CD8-positive, alpha-beta T cell (primary cell): ENCODE measurements at regions of chr15 and their contacts with region 1.

Region 1: GRCh38 chr15:72272213-72273002 is at the start of gene PARP6:
- DNase-seq: peak; percentile 97 to 100 (median 99)
- ATAC-seq: peak; percentile 95
- H3K4me3 ChIP-seq: peak within 1 kb of the TSS; percentile 82 to 89
- H3K4me3 Mint-ChIP-seq: peak within 1 kb of the TSS; percentile 87
- H3K27ac ChIP-seq: peak within 1 kb of the TSS; percentile 84 to 85
- H3K27ac Mint-ChIP-seq: peak within 1 kb of the TSS; percentile 93
- H3K4me1 ChIP-seq: peaks cover 28% of the 10 kb centered on the region
- H3K4me1 Mint-ChIP-seq: peaks cover 43% of the 10 kb centered on the region
- H3K27me3 ChIP-seq: no peaks in the 10 kb centered on the region
- H3K27me3 Mint-ChIP-seq: no peaks in the 10 kb centered on the region
- CTCF ChIP-seq: peak; percentile 61
- total RNA-seq, gene PARP6: 133 to 137 TPM

Region 2: GRCh38 chr15:72199711-72200212 is 72.6 kb before region 1 on chr15:
- CTCF ChIA-PET with region 1: interaction called, 7 read pairs
- POLR2A ChIA-PET with region 1: interaction called, 3 read pairs
- intact Hi-C with region 1: loop called (anchors 1 to 5 kb)
- DNase-seq: peak; percentile 55 to 84 (median 77)
- ATAC-seq: peak; percentile 91
- H3K4me3 ChIP-seq: no peak overlapping the region
- H3K4me3 Mint-ChIP-seq: no peak overlapping the region
- H3K27ac ChIP-seq: no peak overlapping the region
- H3K27ac Mint-ChIP-seq: no peak overlapping the region
- H3K4me1 ChIP-seq: peaks cover 5% of the 10 kb centered on the region
- H3K4me1 Mint-ChIP-seq: peaks cover 9% of the 10 kb centered on the region
- H3K27me3 ChIP-seq: peaks cover 0 to 4% of the 10 kb centered on the region in 2 experiments
- H3K27me3 Mint-ChIP-seq: peaks cover 13% of the 10 kb centered on the region
- CTCF ChIP-seq: peak; percentile 83

Region 3: DNA sequence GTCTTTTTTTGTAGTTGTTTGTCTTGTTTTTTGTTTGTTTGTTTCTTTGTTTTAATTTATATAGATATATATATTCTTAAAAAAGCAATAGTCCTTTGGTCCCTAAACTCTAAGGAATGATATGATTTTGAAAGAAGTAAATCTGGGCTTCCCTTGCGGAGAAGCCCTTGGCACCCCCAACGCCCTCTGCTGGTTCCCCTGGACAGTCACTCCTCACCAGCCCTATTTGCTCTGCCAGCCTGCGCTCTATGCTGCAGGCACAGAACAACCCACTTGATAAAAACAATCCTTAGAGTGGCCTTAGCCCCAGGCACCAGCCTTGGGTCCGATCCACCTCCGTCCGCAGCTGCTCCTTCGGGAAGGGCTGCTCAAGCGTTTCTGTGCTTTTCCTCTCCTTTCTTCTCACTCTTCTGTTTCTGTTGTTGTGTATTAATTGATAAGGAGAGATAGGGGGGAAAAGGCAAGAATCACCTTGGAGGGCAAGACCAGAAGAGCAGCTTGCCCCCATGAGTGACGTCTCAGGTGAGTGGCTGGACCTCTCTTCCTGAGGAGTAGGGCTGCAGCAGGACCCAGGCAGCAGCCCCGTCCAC is 13.6 kb after region 1 on chr15:
- CTCF ChIA-PET with region 1: interaction called, 16 read pairs
- POLR2A ChIA-PET with region 1: no interaction called
- intact Hi-C with region 1: no loop called
- DNase-seq: peak in 8 of 9 experiments; percentile 17 to 69 (median 58)
- ATAC-seq: peak; percentile 65
- H3K4me3 ChIP-seq: no peak overlapping the region
- H3K4me3 Mint-ChIP-seq: no peak overlapping the region
- H3K27ac ChIP-seq: no peak overlapping the region
- H3K27ac Mint-ChIP-seq: no peak overlapping the region
- H3K4me1 ChIP-seq: no peaks in the 10 kb centered on the region
- H3K4me1 Mint-ChIP-seq: no peaks in the 10 kb centered on the region
- H3K27me3 ChIP-seq: no peaks in the 10 kb centered on the region
- H3K27me3 Mint-ChIP-seq: no peaks in the 10 kb centered on the region
- CTCF ChIP-seq: peak; percentile 54

Region 4: GRCh38 chr15:72319985-72320671 is 47.7 kb after region 1 on chr15 and contains the start of gene CELF6:
- CTCF ChIA-PET with region 1: no interaction called
- POLR2A ChIA-PET with region 1: no interaction called
- intact Hi-C with region 1: loop called in 1 of 2 experiments (anchors 1 kb)
- DNase-seq: peak; percentile 41 to 91 (median 70)
- ATAC-seq: peak; percentile 82
- H3K4me3 ChIP-seq: peak within 1 kb of the TSS; percentile 14 to 53
- H3K4me3 Mint-ChIP-seq: peak within 1 kb of the TSS; percentile 80
- H3K27ac ChIP-seq: peak within 1 kb of the TSS in 1 of 2 experiments; percentile 25
- H3K27ac Mint-ChIP-seq: peak within 1 kb of the TSS; percentile 82
- H3K4me1 ChIP-seq: peaks cover 7% of the 10 kb centered on the region
- H3K4me1 Mint-ChIP-seq: peaks cover 17% of the 10 kb centered on the region
- H3K27me3 ChIP-seq: no peaks in the 10 kb centered on the region
- H3K27me3 Mint-ChIP-seq: no peaks in the 10 kb centered on the region
- CTCF ChIP-seq: no peak
- total RNA-seq, gene CELF6: 2.4 to 2.7 TPM

Region 5: DNA sequence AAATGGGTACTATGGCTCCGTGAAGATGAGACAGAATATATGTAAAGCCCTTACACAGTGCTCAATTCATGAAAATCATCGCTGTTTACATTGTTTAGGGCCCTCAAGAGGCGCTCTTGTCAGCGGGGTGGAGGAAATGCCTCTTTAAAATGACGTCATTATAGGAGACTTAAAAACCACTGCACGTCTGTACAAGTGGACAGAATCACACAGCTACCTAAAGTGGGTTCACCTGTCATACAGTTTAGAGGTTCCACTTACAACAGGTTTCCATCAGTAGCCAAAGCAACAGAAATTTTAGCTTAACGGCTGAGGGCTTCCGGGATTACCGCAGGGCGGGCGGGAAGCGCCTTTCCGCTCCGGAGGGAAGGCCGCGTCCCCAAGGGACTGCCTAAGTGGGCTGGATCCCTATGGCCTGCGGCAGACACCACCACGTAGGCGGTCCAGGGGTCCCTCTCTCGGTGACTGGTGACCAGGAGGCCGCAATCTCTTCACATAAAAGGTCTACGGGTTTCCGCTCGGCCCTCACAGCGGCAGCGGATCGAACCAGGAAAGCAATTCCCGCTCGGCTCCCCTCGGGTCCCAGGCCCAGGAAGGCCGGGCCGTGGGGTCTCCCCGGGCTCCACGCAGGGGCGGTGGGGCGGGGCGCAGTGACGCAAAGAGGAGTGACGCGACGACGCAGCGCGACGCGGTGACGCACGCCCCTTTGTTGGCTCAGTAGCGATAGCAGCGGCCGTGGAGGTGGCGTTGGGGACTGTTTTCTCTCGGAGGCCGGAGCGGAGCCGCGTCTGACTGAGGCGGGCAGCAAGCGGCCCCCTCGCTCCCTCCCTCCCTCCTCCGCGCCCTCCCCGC is 201.4 kb after region 1 on chr15 and contains the start of gene ARIH1:
- CTCF ChIA-PET with region 1: interaction called, 3 read pairs
- POLR2A ChIA-PET with region 1: interaction called, 4 read pairs
- intact Hi-C with region 1: loop called (anchors 1 to 2 kb)
- DNase-seq: peak; percentile 95 to 99 (median 96)
- ATAC-seq: peak; percentile 72
- H3K4me3 ChIP-seq: peak within 1 kb of the TSS; percentile 93 to 100
- H3K4me3 Mint-ChIP-seq: peak within 1 kb of the TSS; percentile 97
- H3K27ac ChIP-seq: peak within 1 kb of the TSS; percentile 100
- H3K27ac Mint-ChIP-seq: peak within 1 kb of the TSS; percentile 99
- H3K4me1 ChIP-seq: peaks cover 46% of the 10 kb centered on the region
- H3K4me1 Mint-ChIP-seq: peaks cover 50% of the 10 kb centered on the region
- H3K27me3 ChIP-seq: no peaks in the 10 kb centered on the region
- H3K27me3 Mint-ChIP-seq: no peaks in the 10 kb centered on the region
- CTCF ChIP-seq: peak; percentile 42
- total RNA-seq, gene ARIH1: 343 to 351 TPM

Region 6: DNA sequence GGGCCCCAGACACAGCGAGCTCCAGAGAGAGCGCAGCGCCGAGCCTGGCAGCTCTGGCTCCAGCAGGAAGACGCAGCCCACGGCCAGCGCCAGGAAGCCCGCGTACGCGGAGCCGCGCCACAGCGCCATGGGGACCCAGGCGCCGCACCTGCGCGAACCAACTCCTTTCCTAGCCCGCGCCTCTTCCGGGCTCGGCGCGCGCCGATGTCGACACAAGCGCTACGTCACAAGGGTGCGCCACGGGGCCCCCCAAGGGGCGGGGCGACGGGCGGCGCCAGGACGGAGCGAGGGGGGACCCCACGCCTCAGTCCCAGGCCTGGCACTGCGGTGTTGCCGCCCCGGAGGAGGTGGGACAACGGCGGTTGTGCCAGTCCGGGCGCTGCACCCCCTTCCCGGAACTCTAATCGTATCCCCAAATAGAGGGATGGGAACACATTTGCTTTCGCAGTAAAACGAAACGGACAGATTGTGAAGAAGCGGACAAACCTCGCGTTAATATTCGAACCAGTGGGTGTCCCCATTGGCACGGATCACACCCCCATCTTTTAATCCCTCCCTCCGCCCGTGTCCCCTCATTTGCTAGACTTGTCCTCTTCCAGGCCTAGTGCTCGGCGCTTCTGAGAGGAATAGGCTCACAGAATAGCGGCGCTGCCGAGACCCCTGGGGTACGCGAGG is 511.3 kb after region 1 on chr15 and contains the start of gene ADPGK:
- CTCF ChIA-PET with region 1: no interaction called
- POLR2A ChIA-PET with region 1: no interaction called
- intact Hi-C with region 1: loop called (anchors 1 to 2 kb)
- DNase-seq: peak; percentile 92 to 99 (median 96)
- ATAC-seq: peak; percentile 80
- H3K4me3 ChIP-seq: peak within 1 kb of the TSS; percentile 90 to 91
- H3K4me3 Mint-ChIP-seq: peak within 1 kb of the TSS; percentile 96
- H3K27ac ChIP-seq: peak within 1 kb of the TSS; percentile 93 to 95
- H3K27ac Mint-ChIP-seq: peak within 1 kb of the TSS; percentile 97
- H3K4me1 ChIP-seq: peaks cover 43% of the 10 kb centered on the region
- H3K4me1 Mint-ChIP-seq: peaks cover 50% of the 10 kb centered on the region
- H3K27me3 ChIP-seq: no peaks in the 10 kb centered on the region
- H3K27me3 Mint-ChIP-seq: no peaks in the 10 kb centered on the region
- CTCF ChIP-seq: no peak
- total RNA-seq, gene ADPGK: 113 to 120 TPM

Region 7: DNA sequence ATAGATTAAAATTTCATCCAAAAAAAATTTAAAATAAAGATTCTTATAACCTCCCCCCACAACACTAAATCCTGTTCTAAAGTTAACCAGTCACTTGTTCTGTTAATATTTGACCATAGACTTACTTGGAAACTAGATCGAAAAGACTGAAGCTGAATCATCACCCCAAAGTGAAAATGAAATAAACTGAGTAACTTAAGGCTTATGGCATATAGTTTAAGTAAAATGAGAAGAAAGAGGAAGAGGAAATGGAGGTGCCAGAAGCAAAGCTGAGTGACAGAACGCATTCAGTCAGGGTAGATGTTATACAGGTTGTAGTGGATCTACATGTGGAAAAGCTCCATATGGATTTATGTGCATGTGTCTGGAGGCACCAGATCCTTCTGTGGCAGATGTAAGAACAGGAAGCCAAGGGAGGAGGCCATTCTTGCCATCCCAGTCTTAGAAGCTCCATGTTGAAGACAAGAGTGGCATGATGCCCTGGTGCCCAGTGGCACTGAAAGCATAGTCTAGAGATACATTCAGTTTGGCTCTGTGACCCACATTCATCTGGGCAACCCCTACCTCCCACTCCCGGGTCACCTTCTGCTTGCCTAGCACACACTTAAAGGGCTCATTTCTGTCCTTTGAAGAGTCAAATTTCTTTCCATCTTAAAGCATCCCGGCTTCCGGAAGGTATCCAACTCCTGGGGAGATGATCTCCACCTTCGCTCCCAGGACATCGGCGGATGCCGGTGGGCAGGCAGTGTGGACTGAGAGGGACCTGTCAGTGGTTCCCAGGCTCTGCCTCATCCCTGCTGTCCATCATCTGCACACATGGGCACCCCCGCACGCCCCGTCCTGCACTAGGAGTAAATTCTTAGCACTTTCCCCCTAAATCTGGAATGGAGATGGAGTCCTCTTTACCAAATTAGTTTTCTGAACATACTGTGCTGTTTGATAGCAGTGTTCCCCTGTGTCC is 870.7 kb after region 1 on chr15:
- CTCF ChIA-PET with region 1: no interaction called
- POLR2A ChIA-PET with region 1: no interaction called
- intact Hi-C with region 1: no loop called
- DNase-seq: peak in 1 of 9 experiments; percentile 1
- ATAC-seq: no peak
- H3K4me3 ChIP-seq: no peak overlapping the region
- H3K4me3 Mint-ChIP-seq: no peak overlapping the region
- H3K27ac ChIP-seq: peak overlapping the region in 1 of 2 experiments; percentile 10
- H3K27ac Mint-ChIP-seq: peak overlapping the region; percentile 70
- H3K4me1 ChIP-seq: no peaks in the 10 kb centered on the region
- H3K4me1 Mint-ChIP-seq: peaks cover 3% of the 10 kb centered on the region
- H3K27me3 ChIP-seq: no peaks in the 10 kb centered on the region
- H3K27me3 Mint-ChIP-seq: peaks cover 7% of the 10 kb centered on the region
- CTCF ChIP-seq: no peak